ENCODE measurements at regions of chr14 and their contacts with region 1.

Region 1: DNA sequence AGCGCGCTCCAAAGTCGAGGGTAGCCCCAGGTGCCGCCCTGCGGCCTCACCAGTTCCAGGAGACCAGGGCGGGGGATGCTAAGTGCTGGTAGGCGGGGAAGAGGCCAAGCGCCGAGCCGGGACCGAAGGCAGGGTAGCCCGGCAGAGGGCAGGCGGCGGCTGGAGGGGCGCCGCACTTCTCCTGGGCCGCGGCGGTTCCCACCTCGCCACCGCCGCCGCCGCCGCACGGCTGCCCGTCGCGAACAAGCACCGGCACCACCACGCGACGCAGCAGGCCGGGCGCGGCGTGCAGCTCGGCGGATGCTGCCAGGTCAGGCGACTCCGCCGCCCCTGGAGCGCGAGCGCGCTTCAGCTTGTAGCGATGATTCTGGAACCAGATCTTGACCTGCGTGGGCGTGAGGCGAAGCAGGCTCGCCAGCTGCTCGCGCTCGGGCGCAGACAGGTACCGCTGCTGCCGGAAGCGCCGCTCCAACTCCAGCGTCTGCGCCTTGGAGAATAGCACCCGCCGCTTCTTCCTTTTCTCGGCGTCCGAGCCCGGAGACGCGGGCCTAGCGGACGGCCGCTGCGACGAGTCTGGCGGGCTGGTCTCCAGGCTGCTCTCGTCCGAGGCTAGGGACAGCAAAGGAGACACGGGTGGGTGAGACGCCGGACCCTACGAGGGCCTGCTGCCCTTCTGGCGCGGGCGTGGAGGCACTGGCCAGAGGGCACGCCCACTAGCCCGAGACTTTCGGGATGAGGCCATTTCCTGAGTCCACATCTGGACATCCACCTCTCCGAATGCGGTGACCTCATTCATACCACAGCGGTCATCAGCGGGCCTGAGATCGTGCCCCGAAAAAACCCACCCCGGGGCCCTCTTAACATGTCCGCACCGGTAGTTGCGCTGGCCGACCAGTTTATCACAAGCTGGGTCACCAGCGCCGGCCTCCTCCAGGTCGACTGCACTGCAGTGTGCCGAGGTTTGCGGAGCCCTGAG is 1.3 kb downstream of the NKX2-8 start:
- DNase-seq: peak; percentile 37
- H3K4me3 Mint-ChIP-seq: no peak overlapping the region
- H3K27ac Mint-ChIP-seq: no peak overlapping the region
- H3K4me1 Mint-ChIP-seq: no peaks in the 10 kb centered on the region
- H3K27me3 Mint-ChIP-seq: peaks cover 60% of the 10 kb centered on the region

Region 2: GRCh38 chr14:36661756-36662498 is 80.8 kb after region 1 on chr14 and contains the start of gene PAX9:
- CTCF ChIA-PET with region 1: no interaction called
- POLR2A ChIA-PET with region 1: no interaction called
- intact Hi-C with region 1: loop called (anchors 2 kb)
- DNase-seq: peak; percentile 73
- H3K4me3 Mint-ChIP-seq: no peak within 1 kb of the TSS
- H3K27ac Mint-ChIP-seq: no peak within 1 kb of the TSS
- H3K4me1 Mint-ChIP-seq: peaks cover 47% of the 10 kb centered on the region
- H3K27me3 Mint-ChIP-seq: peaks cover 76% of the 10 kb centered on the region
- total RNA-seq, gene PAX9: not detected

Measured in activated CD4-positive, alpha-beta memory T cell treated with anti-CD3 and anti-CD28 coated beads for 36 hours (primary cell).